Psoas muscle (tissue), 8 donors: ENCODE measurements at regions of chr1 and their contacts with region 1.

Region 1: DNA sequence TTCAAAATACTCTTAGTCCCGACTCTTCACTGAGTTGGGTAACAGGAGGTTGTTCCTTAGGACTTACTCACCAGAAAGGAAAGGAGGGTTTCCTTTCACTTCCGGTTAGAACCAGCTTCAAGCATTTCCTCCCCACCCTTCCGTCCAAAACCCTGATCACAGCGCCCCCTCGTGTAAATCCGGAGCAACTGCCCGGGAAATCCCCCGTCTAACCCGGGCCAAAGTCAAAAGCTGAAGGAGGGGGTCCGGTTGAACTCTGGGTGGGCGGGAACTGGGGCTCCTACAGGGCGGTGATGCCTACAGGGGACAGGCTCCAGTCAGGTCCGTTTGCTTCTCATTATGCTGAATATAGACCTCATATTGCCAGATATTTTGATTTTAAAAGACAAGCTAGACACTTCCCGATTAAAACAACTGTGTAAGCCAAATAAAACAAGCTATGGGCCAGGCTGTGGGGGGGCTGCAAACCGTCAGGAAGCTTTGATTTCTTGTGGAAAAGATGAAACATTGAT is 15.0 kb upstream of the MTARC2 start:
- DNase-seq: peak; percentile 70 to 86
- ATAC-seq: peak; percentile 87 to 99 (median 94)
- H3K4me3 ChIP-seq: peak overlapping the region; percentile 35
- H3K27ac ChIP-seq: peak overlapping the region; percentile 3
- H3K4me1 ChIP-seq: no peaks in the 10 kb centered on the region
- H3K27me3 ChIP-seq: no peaks in the 10 kb centered on the region
- CTCF ChIP-seq: peak; percentile 75

Region 2: DNA sequence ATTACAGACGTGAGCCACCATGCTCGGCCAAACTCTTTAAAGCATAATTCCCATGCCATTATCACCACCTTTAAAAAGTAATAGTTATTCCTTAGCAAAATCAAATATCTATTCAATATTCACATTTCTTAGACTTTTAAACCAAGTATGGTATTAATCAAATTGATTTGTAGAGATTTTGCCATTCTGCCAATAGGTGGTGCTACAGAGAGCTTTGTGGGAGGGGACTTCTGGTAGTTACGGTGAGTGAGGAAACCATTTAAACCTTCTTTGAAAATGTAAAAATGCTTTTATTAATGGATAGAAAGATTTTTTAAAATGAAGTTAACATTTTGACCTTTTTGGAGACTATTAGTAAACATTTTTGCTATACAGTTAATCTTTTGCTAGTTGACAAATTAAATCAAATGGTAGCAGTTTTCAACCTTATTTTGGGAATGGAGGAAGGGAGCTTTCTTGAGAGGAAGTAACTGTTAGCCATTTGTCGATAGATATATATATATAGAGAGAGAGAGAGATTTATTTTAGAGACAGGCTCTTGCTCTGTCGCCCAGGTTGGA is 619.9 kb before region 1 on chr1:
- intact Hi-C with region 1: no loop called
- DNase-seq: no peak
- ATAC-seq: no peak
- H3K4me3 ChIP-seq: no peak overlapping the region
- H3K27ac ChIP-seq: no peak overlapping the region
- H3K4me1 ChIP-seq: no peaks in the 10 kb centered on the region
- H3K27me3 ChIP-seq: no peaks in the 10 kb centered on the region
- CTCF ChIP-seq: peak; percentile 35

Region 3: DNA sequence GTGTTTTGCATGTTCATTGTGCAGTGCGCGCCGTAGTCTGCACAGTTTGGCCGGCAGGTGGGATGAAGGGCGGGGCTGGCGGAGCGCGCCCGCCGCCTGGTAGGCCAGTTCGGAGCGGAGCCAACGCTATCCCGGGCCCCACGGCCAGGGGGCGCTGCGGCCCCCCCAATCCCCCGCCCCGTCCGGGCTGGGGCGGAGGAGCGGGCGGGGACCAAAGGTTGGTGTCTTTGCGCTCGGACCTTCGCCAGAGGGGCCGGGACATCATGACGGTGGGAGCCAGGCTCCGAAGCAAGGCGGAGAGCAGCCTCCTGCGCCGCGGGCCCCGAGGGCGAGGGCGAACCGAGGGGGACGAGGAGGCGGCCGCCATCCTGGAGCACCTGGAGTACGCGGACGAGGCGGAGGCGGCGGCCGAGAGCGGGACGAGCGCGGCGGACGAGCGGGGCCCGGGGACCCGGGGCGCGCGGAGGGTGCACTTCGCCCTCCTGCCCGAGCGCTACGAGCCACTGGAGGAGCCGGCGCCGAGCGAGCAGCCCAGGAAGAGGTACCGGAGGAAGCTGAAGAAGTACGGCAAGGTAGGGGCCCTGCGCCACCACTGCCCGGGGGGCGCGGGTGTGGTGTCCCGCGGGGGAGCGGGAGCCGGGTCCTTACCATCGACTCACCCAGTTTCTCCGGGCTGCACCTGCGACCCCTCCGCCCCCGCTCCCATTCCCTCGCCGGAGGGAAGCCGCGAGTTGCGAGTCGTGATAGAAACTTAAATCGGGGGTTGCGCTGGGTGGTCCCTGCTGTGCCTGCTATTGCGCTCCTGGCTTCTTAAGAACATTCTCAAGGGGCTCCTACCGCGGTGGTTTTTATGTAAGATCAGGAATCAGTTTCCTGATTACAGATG is 42.8 kb before region 1 on chr1 and contains the start of gene C1orf115:
- intact Hi-C with region 1: loop called (anchors 2 to 5 kb)
- DNase-seq: peak; percentile 71 to 88
- ATAC-seq: peak; percentile 93 to 99 (median 96)
- H3K4me3 ChIP-seq: peak within 1 kb of the TSS; percentile 89
- H3K27ac ChIP-seq: peak within 1 kb of the TSS; percentile 46
- H3K4me1 ChIP-seq: no peaks in the 10 kb centered on the region
- H3K27me3 ChIP-seq: peaks cover 0 to 2% (median 0%) of the 10 kb centered on the region in 3 donors
- CTCF ChIP-seq: peak; percentile 95
- total RNA-seq, gene C1orf115: 4.7 to 8.9 (median 5.7) TPM